B cell (primary cell): ENCODE measurements at regions of chr2 and their contacts with region 1.

Region 1: GRCh38 chr2:26345545-26346453 is at the start of gene SELENOI:
- DNase-seq: peak; percentile 100
- ATAC-seq: peak; percentile 96
- H3K4me3 ChIP-seq: peak within 1 kb of the TSS; percentile 64 to 95 (median 86)
- H3K4me3 Mint-ChIP-seq: peak within 1 kb of the TSS; percentile 100
- H3K27ac ChIP-seq: peak within 1 kb of the TSS; percentile 83 to 92
- H3K27ac Mint-ChIP-seq: peak within 1 kb of the TSS; percentile 99
- H3K4me1 ChIP-seq: peaks cover 18 to 20% of the 10 kb centered on the region in 2 donors
- H3K4me1 Mint-ChIP-seq: peaks cover 35% of the 10 kb centered on the region
- H3K27me3 ChIP-seq: no peaks in the 10 kb centered on the region
- H3K27me3 Mint-ChIP-seq: no peaks in the 10 kb centered on the region
- CTCF ChIP-seq: no peak
- total RNA-seq, gene SELENOI: 20.0 and 20.1 TPM in 2 replicates

Region 2: GRCh38 chr2:25878361-25879132 is 467.3 kb before region 1 on chr2 and contains the start of gene ASXL2:
- CTCF ChIA-PET with region 1: no interaction called
- POLR2A ChIA-PET with region 1: interaction called, 3 read pairs
- intact Hi-C with region 1: loop called (anchors 1 kb)
- DNase-seq: peak; percentile 99
- ATAC-seq: peak; percentile 89
- H3K4me3 ChIP-seq: peak within 1 kb of the TSS; percentile 87 to 97 (median 97)
- H3K4me3 Mint-ChIP-seq: peak within 1 kb of the TSS; percentile 98
- H3K27ac ChIP-seq: peak within 1 kb of the TSS; percentile 91 to 94
- H3K27ac Mint-ChIP-seq: peak within 1 kb of the TSS; percentile 99
- H3K4me1 ChIP-seq: peaks cover 13 to 14% of the 10 kb centered on the region in 2 donors
- H3K4me1 Mint-ChIP-seq: peaks cover 34% of the 10 kb centered on the region
- H3K27me3 ChIP-seq: peaks cover 0 to 7% (median 3%) of the 10 kb centered on the region in 4 experiments
- H3K27me3 Mint-ChIP-seq: peaks cover 5% of the 10 kb centered on the region
- CTCF ChIP-seq: no peak
- total RNA-seq, gene ASXL2: 51.5 and 55.0 TPM in 2 replicates

Region 3: DNA sequence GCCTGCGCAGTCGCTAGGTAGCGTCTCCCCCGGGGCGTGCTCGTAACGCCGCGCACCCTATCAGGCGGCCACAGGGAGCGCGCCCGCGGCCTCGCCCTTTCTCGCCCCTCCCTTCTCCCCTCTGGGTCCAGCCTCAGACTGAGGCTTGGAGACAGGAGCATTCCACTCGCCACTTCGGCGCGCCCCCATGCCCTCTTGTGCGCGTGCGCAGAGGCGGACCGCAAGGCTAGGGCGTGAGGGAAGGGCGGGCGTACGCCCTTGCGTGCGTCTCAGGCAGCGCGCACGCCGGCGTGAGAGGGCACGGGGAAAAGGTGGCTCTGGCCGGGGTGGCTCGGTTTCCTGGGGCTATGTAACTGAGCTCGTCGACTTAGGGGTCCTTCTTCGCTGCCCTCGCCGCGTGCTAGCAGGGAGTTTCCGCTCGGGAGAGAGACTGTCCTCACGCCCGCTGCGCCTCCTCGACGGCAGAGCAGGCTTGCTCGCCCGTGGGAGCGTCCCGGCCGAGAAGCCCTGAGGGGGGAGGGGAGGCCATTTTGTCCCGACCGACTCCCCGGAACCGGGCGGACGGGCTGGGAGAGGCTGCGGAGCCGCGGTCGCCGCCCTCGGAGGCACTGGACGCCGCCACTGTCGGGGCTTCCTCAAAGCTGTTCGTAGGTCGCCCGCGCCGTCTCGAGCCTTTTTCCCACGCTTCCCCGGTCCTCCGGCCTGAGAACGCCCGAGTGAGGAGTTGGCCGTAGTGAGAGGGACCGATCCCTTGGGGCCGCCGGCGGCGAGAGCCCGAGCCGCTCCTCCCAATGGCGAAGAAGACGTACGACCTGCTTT is 311.8 kb before region 1 on chr2 and contains the start of gene RAB10:
- CTCF ChIA-PET with region 1: no interaction called
- POLR2A ChIA-PET with region 1: no interaction called
- intact Hi-C with region 1: loop called (anchors 1 kb)
- DNase-seq: peak; percentile 100
- ATAC-seq: peak; percentile 91
- H3K4me3 ChIP-seq: peak within 1 kb of the TSS; percentile 78 to 97 (median 89)
- H3K4me3 Mint-ChIP-seq: peak within 1 kb of the TSS; percentile 97
- H3K27ac ChIP-seq: peak within 1 kb of the TSS; percentile 81 to 94
- H3K27ac Mint-ChIP-seq: peak within 1 kb of the TSS; percentile 98
- H3K4me1 ChIP-seq: peaks cover 22 to 29% of the 10 kb centered on the region in 2 donors
- H3K4me1 Mint-ChIP-seq: peaks cover 39% of the 10 kb centered on the region
- H3K27me3 ChIP-seq: no peaks in the 10 kb centered on the region
- H3K27me3 Mint-ChIP-seq: no peaks in the 10 kb centered on the region
- CTCF ChIP-seq: no peak
- total RNA-seq, gene RAB10: 64.1 and 66.7 TPM in 2 replicates

Region 4: GRCh38 chr2:26202981-26203490 is 142.8 kb before region 1 on chr2:
- CTCF ChIA-PET with region 1: no interaction called
- POLR2A ChIA-PET with region 1: no interaction called
- intact Hi-C with region 1: no loop called
- DNase-seq: no peak
- ATAC-seq: no peak
- H3K4me3 ChIP-seq: no peak overlapping the region
- H3K4me3 Mint-ChIP-seq: no peak overlapping the region
- H3K27ac ChIP-seq: no peak overlapping the region
- H3K27ac Mint-ChIP-seq: no peak overlapping the region
- H3K4me1 ChIP-seq: no peaks in the 10 kb centered on the region
- H3K4me1 Mint-ChIP-seq: peaks cover under 1% of the 10 kb centered on the region
- H3K27me3 ChIP-seq: no peaks in the 10 kb centered on the region
- H3K27me3 Mint-ChIP-seq: no peaks in the 10 kb centered on the region
- CTCF ChIP-seq: no peak

Region 5: GRCh38 chr2:26299471-26300101 is 46.2 kb before region 1 on chr2:
- CTCF ChIA-PET with region 1: interaction called, 3 read pairs
- POLR2A ChIA-PET with region 1: interaction called, 6 read pairs
- intact Hi-C with region 1: loop called (anchors 2 kb)
- DNase-seq: peak; percentile 59
- ATAC-seq: peak; percentile 42
- H3K4me3 ChIP-seq: peak overlapping the region; percentile 84 to 97 (median 92)
- H3K4me3 Mint-ChIP-seq: no peak overlapping the region
- H3K27ac ChIP-seq: peak overlapping the region; percentile 68 to 91
- H3K27ac Mint-ChIP-seq: no peak overlapping the region
- H3K4me1 ChIP-seq: peaks cover 15 to 20% of the 10 kb centered on the region in 2 donors
- H3K4me1 Mint-ChIP-seq: no peaks in the 10 kb centered on the region
- H3K27me3 ChIP-seq: no peaks in the 10 kb centered on the region
- H3K27me3 Mint-ChIP-seq: no peaks in the 10 kb centered on the region
- CTCF ChIP-seq: no peak

Region 6: DNA sequence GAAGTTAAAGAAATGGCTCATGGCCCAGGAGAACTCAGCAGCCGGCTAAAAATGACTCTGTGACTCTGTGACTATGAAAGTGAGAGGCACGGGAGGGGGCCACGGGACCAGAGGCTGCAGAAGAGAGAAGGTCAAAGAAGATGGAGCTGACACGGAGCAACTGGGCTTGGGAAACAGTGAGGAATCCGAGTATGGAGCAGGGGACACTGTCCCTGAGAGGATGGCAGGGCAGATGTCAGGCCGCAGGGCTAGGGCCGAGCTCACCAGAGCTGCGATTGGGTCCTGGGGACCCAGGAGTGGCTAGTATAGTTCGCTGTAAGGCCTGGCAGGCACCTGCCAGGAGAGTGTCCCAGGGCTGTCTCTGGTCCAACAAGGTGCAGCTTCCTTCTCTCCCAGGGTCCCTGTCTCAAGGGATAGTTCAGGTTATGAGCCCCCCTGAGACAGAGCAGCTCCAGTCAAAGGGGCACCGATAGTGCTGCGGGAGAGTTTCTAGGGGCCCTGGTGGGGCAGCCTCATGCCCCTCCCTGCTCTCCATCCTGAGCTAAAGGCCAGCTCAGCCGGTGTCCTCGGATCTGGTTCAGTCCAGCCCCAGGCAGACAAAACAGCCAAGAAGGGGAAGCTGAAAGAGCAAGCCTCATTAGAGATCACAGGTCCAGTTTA is 252.7 kb after region 1 on chr2:
- CTCF ChIA-PET with region 1: no interaction called
- POLR2A ChIA-PET with region 1: no interaction called
- intact Hi-C with region 1: no loop called
- DNase-seq: no peak
- ATAC-seq: no peak
- H3K4me3 ChIP-seq: no peak overlapping the region
- H3K4me3 Mint-ChIP-seq: no peak overlapping the region
- H3K27ac ChIP-seq: no peak overlapping the region
- H3K27ac Mint-ChIP-seq: no peak overlapping the region
- H3K4me1 ChIP-seq: no peaks in the 10 kb centered on the region
- H3K4me1 Mint-ChIP-seq: no peaks in the 10 kb centered on the region
- H3K27me3 ChIP-seq: peaks cover 0 to 13% (median 8%) of the 10 kb centered on the region in 4 experiments
- H3K27me3 Mint-ChIP-seq: peaks cover 43% of the 10 kb centered on the region
- CTCF ChIP-seq: no peak